ENCODE measurements at regions of chr3 and their contacts with region 1.

Region 1: GRCh38 chr3:56629047-56629446 is 54.0 kb downstream of the TASOR start:
- DNase-seq: no peak
- ATAC-seq: no peak
- H3K4me3 Mint-ChIP-seq: no peak overlapping the region
- H3K27ac Mint-ChIP-seq: no peak overlapping the region
- H3K4me1 Mint-ChIP-seq: peaks cover 5% of the 10 kb centered on the region
- H3K27me3 Mint-ChIP-seq: no peaks in the 10 kb centered on the region

Region 2: GRCh38 chr3:56164436-56164835 is 464.6 kb before region 1 on chr3:
- CTCF ChIA-PET with region 1: no interaction called
- POLR2A ChIA-PET with region 1: no interaction called
- intact Hi-C with region 1: no loop called
- DNase-seq: no peak
- ATAC-seq: no peak
- H3K4me3 Mint-ChIP-seq: no peak overlapping the region
- H3K27ac Mint-ChIP-seq: no peak overlapping the region
- H3K4me1 Mint-ChIP-seq: no peaks in the 10 kb centered on the region
- H3K27me3 Mint-ChIP-seq: peaks cover 7% of the 10 kb centered on the region

Region 3: GRCh38 chr3:56673781-56674457 is 44.9 kb after region 1 on chr3:
- CTCF ChIA-PET with region 1: no interaction called
- POLR2A ChIA-PET with region 1: interaction called, 3 read pairs
- intact Hi-C with region 1: loop called in 1 of 2 experiments (anchors 1 kb)
- DNase-seq: no peak
- ATAC-seq: no peak
- H3K4me3 Mint-ChIP-seq: no peak overlapping the region
- H3K27ac Mint-ChIP-seq: no peak overlapping the region
- H3K4me1 Mint-ChIP-seq: peaks cover 22% of the 10 kb centered on the region
- H3K27me3 Mint-ChIP-seq: no peaks in the 10 kb centered on the region

Region 4: GRCh38 chr3:56737006-56737405 is 108.0 kb after region 1 on chr3:
- CTCF ChIA-PET with region 1: no interaction called
- POLR2A ChIA-PET with region 1: no interaction called
- intact Hi-C with region 1: no loop called
- DNase-seq: no peak
- ATAC-seq: no peak
- H3K4me3 Mint-ChIP-seq: no peak overlapping the region
- H3K27ac Mint-ChIP-seq: no peak overlapping the region
- H3K4me1 Mint-ChIP-seq: peaks cover 32% of the 10 kb centered on the region
- H3K27me3 Mint-ChIP-seq: no peaks in the 10 kb centered on the region

Region 5: DNA sequence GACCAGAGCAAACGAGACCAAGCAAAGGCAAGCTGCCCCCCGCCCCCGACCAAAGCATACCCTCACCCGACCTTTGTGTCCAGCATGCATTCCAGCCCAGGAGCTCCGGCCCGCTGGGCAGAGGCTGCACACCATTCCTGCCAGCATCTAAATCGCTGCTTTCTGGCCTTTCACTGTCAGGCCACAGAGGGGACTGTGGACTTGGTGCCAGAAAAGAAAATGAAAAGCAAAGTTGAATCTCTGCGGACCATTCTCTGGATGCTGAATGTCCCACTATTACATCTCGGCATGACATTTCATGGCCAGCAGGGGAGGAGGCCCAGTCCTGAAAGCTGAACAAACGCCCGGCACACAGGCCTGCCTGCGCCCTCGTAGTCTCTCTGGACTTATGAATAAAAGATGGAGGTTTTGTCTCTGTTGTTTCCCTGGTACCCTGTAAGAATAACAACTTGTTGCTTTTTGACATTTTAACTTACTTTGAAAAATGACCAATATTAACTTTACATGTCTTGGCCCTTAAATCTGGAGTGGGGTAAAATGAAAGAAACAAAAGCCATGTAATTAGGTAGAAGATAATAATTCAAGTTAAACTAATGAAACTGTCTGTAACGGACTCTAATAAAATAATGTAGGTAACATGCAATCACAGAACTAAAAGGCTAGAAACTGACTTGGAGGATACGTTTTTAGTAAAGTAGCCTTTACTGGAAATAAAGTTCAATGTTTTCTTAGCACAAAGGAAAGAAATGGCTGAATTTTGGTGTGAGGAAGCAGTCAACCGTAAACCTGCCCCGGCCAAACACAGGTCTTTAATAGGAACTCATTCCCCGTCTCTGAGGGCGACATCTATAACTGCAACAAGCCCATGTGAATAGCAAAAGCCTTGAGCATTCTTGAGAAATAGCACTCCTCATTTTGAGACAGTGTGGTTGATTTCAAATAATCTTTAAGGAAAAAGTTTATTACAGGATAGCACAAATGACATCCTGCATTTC is 523.4 kb after region 1 on chr3:
- CTCF ChIA-PET with region 1: no interaction called
- POLR2A ChIA-PET with region 1: no interaction called
- intact Hi-C with region 1: no loop called
- DNase-seq: no peak
- ATAC-seq: no peak
- H3K4me3 Mint-ChIP-seq: no peak overlapping the region
- H3K27ac Mint-ChIP-seq: no peak overlapping the region
- H3K4me1 Mint-ChIP-seq: no peaks in the 10 kb centered on the region
- H3K27me3 Mint-ChIP-seq: peaks cover 23% of the 10 kb centered on the region

Measured in activated CD4-positive, alpha-beta T cell treated with anti-CD3 and anti-CD28 coated beads for 36 hours (primary cell).